H1 (cell line): ENCODE measurements at regions of chr17 and their contacts with region 1.

Region 1: DNA sequence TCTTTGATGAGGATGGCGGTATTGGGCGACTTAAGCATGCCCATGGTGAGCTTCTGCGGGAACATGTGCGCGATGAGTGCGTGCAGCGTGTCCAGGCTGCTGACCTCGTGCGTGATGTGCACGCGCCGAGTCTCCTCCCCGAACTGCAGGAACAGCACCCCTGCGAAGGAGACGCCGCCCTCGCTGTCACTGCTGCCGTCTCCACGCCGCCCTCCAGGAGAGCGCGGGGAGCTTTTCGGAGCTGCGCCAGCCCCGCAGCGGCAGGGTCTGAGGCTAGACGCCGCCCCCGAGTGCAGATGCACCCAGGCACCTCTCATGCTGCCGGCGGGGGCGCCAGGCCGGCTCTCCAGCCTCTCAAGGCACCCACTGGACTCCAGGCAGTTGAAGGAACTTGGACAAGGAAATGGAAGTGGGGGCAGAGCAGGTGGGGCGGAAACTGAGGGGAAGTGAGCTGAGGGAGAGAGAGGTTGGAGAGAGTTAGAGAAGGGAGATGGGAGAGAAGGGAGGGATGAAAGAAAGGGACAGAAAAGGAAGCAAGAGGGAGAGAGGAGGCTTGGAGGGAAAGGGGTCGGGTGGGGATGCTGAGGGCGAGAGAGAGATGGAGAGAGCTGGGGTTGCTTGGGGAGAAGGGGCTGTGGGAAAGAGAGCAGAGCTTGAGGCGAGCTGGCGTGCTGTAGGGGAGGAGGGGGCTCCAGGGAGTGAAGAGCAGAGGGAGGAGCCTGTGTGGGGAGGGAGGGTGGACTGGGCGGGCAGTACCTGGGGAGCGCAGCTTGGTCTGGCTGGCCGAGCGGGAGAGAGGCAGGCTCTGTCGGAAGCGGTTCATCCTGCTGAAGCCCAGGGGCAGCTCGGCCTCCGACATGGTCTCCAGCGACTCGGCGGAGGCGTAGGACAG is 42.1 kb downstream of the SRCIN1 start:
- DNase-seq: peak; percentile 75 to 83
- H3K4me3 ChIP-seq: peak overlapping the region; percentile 28 to 60 (median 48)
- H3K27ac ChIP-seq: no peak overlapping the region
- H3K4me1 ChIP-seq: peaks cover 8 to 50% (median 38%) of the 10 kb centered on the region in 4 experiments
- H3K27me3 ChIP-seq: peaks cover 65 to 95% (median 91%) of the 10 kb centered on the region in 4 experiments
- CTCF ChIP-seq: no peak
- EP300 ChIP-seq: no peak
- POLR2A ChIP-seq: no peak
- RAD21 ChIP-seq: peak in 1 of 2 experiments; percentile 0; a peak in 1 of 4 replicates

Region 2: DNA sequence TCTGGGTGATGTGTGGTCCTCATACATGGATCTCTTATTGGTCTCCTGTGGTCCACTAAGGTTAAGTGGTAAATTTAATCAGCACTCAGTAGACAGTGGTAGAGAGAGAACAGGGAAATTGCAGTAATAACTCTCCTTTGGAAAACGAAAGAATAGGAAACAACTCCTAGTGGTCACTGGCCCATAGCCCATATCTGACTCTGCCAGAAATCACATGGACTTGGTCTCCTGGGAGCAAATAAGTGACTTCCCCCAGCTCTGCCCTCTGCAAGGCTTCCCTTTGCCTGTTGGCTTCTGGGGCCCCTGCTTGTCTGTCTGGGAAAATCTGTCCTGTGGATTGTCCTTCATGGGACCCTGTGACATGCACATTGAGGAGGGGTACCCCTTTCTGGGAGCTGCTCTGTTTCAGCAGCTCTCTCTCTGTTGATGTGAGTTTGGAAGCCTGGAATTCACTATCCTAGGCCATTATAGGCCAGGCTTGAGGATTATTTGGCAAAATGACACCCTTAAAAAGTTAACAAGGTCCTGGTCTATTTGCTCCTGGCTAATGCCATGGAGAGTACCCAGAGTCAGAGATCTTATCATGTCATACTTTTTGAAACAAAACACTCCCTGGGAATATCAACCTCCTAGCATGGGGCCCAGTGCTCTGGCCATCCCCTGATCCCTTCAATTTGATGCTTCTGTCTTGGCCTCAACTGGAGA is 760.7 kb before region 1 on chr17:
- CTCF ChIA-PET with region 1: no interaction called
- POLR2A ChIA-PET with region 1: no interaction called
- DNase-seq: no peak
- H3K4me3 ChIP-seq: no peak overlapping the region
- H3K27ac ChIP-seq: no peak overlapping the region
- H3K4me1 ChIP-seq: no peaks in the 10 kb centered on the region
- H3K27me3 ChIP-seq: no peaks in the 10 kb centered on the region
- CTCF ChIP-seq: no peak
- EP300 ChIP-seq: no peak
- POLR2A ChIP-seq: no peak
- RAD21 ChIP-seq: no peak

Region 3: GRCh38 chr17:38469875-38470274 is 93.7 kb before region 1 on chr17:
- CTCF ChIA-PET with region 1: no interaction called
- POLR2A ChIA-PET with region 1: no interaction called
- DNase-seq: no peak
- H3K4me3 ChIP-seq: no peak overlapping the region
- H3K27ac ChIP-seq: no peak overlapping the region
- H3K4me1 ChIP-seq: peaks cover 0 to 3% (median 0%) of the 10 kb centered on the region in 4 experiments; a peak in 1 of 7 replicates
- H3K27me3 ChIP-seq: no peaks in the 10 kb centered on the region
- CTCF ChIP-seq: no peak
- EP300 ChIP-seq: no peak
- POLR2A ChIP-seq: no peak
- RAD21 ChIP-seq: no peak

Region 4: DNA sequence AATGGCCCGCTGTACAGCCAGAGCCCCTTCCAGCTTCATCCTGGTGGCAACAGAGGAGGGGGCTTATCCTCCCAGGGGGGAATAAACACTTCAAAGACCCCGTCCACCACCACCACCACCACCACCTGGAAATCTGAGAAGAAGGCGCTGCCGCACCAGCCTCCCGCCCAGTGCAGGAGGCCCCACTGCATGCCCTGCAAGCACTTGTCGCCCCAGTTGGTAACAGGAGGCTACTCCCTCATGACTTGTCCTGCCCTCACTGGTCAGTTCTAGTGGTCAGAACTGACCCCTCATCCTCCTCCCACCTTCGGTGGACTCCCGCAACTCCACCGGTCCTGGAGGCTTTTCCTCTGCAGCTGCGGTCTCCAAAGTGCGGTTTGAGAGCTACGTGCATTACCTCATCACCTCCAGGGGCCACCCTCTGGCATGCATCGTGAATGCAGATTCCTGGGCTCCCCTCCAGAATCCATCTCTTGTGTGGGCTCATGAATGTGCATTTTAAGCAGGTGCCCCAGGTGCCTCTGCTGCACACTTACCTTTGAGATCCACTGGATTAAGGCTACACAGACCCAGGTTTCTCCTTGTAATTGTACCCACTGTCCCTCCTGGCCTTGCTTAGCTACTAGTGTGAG is 29.6 kb before region 1 on chr17:
- CTCF ChIA-PET with region 1: interaction called, 363 read pairs
- POLR2A ChIA-PET with region 1: interaction called, 3 read pairs
- DNase-seq: no peak
- H3K4me3 ChIP-seq: no peak overlapping the region
- H3K27ac ChIP-seq: no peak overlapping the region
- H3K4me1 ChIP-seq: peaks cover 0 to 19% (median 5%) of the 10 kb centered on the region in 4 experiments; a peak in 5 of 7 replicates
- H3K27me3 ChIP-seq: peaks cover 0 to 7% (median 1%) of the 10 kb centered on the region in 4 experiments; a peak in 3 of 7 replicates
- CTCF ChIP-seq: no peak
- EP300 ChIP-seq: no peak
- POLR2A ChIP-seq: no peak
- RAD21 ChIP-seq: no peak

Region 5: GRCh38 chr17:38544839-38545209 is 18.8 kb before region 1 on chr17:
- CTCF ChIA-PET with region 1: interaction called, 363 read pairs
- POLR2A ChIA-PET with region 1: interaction called, 7 read pairs
- DNase-seq: no peak
- H3K4me3 ChIP-seq: no peak overlapping the region
- H3K27ac ChIP-seq: no peak overlapping the region
- H3K4me1 ChIP-seq: peaks cover 0 to 7% (median 0%) of the 10 kb centered on the region in 4 experiments; a peak in 2 of 7 replicates
- H3K27me3 ChIP-seq: no peaks in the 10 kb centered on the region; a peak in 1 of 7 replicates
- CTCF ChIP-seq: peak; percentile 50 to 57 (median 55)
- EP300 ChIP-seq: no peak
- POLR2A ChIP-seq: no peak
- RAD21 ChIP-seq: peak; percentile 41 to 60

Region 6: DNA sequence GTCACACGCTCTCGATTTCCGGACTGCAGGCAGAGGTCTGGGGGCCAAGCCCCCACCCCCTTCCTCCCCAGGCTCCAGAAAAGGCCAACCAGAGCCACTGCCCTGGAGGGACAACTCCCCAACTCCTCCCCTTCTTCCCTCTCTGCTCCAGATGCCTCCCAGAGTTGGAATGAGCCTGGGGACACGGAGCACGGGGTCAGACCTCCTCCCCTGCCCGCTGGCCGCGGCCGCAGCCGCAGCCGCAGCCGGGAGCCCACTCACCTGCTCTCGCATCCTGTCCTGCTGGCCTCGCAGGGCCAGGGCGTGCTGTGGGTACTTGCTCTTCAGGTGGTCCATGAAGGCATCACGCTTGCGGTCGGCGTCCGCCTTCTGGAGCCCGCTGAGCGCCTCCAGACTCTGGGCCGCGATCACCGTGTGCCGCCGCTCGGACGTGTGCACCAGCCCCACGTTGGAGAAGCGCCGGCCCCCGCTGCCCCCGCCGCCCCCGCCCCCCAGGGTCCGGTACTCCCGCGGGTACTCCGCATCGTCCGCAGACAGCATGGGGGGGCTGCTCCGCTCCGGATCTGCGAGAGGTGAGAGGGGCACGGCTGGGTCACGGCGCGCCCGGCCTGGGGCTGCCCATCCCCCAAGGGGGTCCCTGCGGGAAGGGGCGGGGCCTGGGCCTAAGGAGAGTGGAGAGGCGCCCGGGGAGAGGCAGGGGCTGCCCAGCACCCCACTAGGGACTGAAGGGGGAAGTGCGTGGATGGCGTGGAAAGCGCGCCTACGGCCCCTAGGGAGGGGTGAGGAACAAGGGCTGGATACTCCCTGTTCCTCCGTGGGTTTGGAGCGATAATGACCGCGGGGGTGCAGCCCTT is 14.8 kb after region 1 on chr17:
- CTCF ChIA-PET with region 1: interaction called, 914 read pairs
- POLR2A ChIA-PET with region 1: interaction called, 10 read pairs
- DNase-seq: no peak
- H3K4me3 ChIP-seq: peak overlapping the region; percentile 14 to 58 (median 41)
- H3K27ac ChIP-seq: no peak overlapping the region
- H3K4me1 ChIP-seq: peaks cover 7 to 26% (median 13%) of the 10 kb centered on the region in 4 experiments
- H3K27me3 ChIP-seq: peaks cover 49 to 77% (median 70%) of the 10 kb centered on the region in 4 experiments
- CTCF ChIP-seq: no peak
- EP300 ChIP-seq: no peak
- POLR2A ChIP-seq: no peak
- RAD21 ChIP-seq: no peak

Region 7: GRCh38 chr17:38598536-38598935 is 34.9 kb after region 1 on chr17:
- CTCF ChIA-PET with region 1: interaction called, 914 read pairs
- POLR2A ChIA-PET with region 1: interaction called, 45 read pairs
- DNase-seq: peak; percentile 88 to 93
- H3K4me3 ChIP-seq: no peak overlapping the region
- H3K27ac ChIP-seq: no peak overlapping the region
- H3K4me1 ChIP-seq: peaks cover 16 to 57% (median 51%) of the 10 kb centered on the region in 4 experiments
- H3K27me3 ChIP-seq: peaks cover 2 to 14% (median 13%) of the 10 kb centered on the region in 4 experiments
- CTCF ChIP-seq: no peak
- EP300 ChIP-seq: peak in 1 of 2 experiments; percentile 70; a peak in 1 of 3 replicates
- POLR2A ChIP-seq: no peak
- RAD21 ChIP-seq: peak in 1 of 2 experiments; percentile 18; a peak in 2 of 4 replicates